ENCODE measurements at regions of chr5 and their contacts with region 1.

Region 1: GRCh38 chr5:126776497-126777256 is at the start of gene LMNB1:
- DNase-seq: peak; percentile 94
- ATAC-seq: peak; percentile 84
- H3K4me3 ChIP-seq: peak within 1 kb of the TSS; percentile 92
- H3K27ac ChIP-seq: peak within 1 kb of the TSS; percentile 87
- H3K4me1 ChIP-seq: no peaks in the 10 kb centered on the region
- H3K27me3 ChIP-seq: no peaks in the 10 kb centered on the region
- CTCF ChIP-seq: no peak
- POLR2A ChIP-seq: peak; percentile 61; the same call in 1 of the 2 replicates
- RAD21 ChIP-seq: no peak
- total RNA-seq, gene LMNB1: 53.6 and 68.6 TPM in 2 replicates

Region 2: DNA sequence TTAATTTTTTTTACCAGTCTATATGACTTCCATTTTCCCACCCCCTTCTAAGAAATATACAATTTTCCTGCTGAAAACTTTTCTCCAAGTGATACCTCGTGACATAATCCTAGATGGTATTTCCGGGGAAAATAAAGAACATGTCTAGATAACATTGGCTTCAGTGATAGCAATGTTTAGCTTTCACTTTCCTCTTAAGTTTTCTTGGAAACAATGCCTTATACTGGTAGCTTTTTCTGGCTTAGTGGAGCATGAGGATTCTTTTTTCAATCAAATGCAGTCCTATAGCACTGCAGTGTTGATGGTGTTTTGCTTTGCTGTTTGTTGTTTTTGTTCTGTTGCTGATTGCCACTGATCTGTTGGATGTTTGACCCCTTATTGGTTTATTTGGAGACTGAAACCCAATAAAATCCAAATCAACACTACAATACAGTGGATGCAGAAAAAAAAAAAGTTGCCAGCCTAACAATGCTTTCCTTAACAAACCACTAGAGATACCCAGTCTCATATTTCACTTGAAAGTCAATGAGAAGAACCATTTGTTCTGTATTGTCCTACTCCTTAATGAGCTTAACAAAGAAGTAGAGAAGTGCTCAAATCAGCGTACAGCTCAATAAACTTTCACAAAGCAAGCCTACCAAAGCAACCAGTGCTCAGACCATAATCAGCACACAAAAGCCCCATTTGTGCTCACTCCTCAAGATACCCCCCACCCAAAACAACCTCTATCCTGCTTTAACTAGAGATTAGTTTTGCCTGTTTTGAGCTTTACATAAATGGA is 427.6 kb before region 1 on chr5:
- CTCF ChIA-PET with region 1: no interaction called
- POLR2A ChIA-PET with region 1: no interaction called
- dilution Hi-C with region 1: no loop called
- in situ Hi-C with region 1: loop called (anchors 10 kb)
- intact Hi-C with region 1: no loop called
- DNase-seq: peak; percentile 54
- ATAC-seq: peak; percentile 76
- H3K4me3 ChIP-seq: no peak overlapping the region
- H3K27ac ChIP-seq: no peak overlapping the region
- H3K4me1 ChIP-seq: peaks cover 13% of the 10 kb centered on the region
- H3K27me3 ChIP-seq: no peaks in the 10 kb centered on the region
- CTCF ChIP-seq: no peak
- POLR2A ChIP-seq: no peak
- RAD21 ChIP-seq: no peak

Region 3: DNA sequence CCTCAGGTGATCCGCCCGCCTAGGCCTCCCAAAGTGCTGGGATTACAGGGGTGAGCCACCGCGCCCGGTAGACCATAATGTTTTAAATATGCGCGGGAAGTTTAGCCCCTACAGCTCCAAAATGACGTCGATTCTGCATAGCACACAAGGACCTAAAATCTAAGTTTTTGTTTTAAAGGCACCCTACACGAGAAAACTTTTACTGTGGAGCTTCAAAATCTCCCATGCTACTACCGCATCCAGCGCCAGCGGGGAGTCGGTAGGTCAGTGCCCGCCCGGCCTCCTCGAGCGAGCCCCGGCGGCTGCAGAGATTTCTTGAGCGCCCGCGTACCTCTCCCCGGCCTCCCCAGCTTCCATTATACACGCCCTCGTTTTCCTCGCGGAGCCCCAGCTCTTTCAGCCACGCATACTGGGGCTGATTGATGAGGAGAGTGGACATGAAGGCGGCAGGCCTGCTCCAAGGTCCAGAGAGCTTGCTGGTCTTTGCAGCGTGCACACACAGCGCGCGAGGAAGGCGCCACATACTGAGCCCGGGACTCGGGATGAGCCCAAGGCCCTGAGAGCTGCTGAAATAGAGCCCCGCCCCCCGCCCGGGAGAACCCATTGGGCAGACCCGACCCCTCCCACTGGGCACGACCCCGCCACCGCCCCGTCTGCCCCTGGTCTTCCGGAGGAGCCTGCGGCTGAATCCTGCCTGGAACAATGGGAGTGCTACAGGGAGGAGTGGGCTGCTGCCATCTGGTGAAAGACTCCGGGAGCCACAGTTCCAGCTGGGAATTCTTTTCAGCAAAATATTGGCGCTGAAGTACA is 181.8 kb before region 1 on chr5 and contains the start of gene ALDH7A1:
- CTCF ChIA-PET with region 1: no interaction called
- POLR2A ChIA-PET with region 1: no interaction called
- dilution Hi-C with region 1: no loop called
- in situ Hi-C with region 1: no loop called
- intact Hi-C with region 1: loop called (anchors 5 kb)
- DNase-seq: no peak
- ATAC-seq: peak; percentile 96
- H3K4me3 ChIP-seq: peak within 1 kb of the TSS; percentile 69
- H3K27ac ChIP-seq: peak within 1 kb of the TSS; percentile 70
- H3K4me1 ChIP-seq: peaks cover 4% of the 10 kb centered on the region
- H3K27me3 ChIP-seq: no peaks in the 10 kb centered on the region
- CTCF ChIP-seq: peak; percentile 56
- POLR2A ChIP-seq: peak; percentile 67
- RAD21 ChIP-seq: peak; percentile 50
- total RNA-seq, gene ALDH7A1: 40.9 and 43.9 TPM in 2 replicates

Region 4: GRCh38 chr5:126656396-126657007 is 120.2 kb before region 1 on chr5:
- CTCF ChIA-PET with region 1: interaction called, 6 read pairs
- POLR2A ChIA-PET with region 1: no interaction called
- dilution Hi-C with region 1: loop called (anchors 25 kb)
- in situ Hi-C with region 1: no loop called
- intact Hi-C with region 1: loop called (anchors 1 kb)
- DNase-seq: peak; percentile 57
- ATAC-seq: peak; percentile 44; the same call in 1 of the 2 replicates
- H3K4me3 ChIP-seq: no peak overlapping the region
- H3K27ac ChIP-seq: no peak overlapping the region
- H3K4me1 ChIP-seq: no peaks in the 10 kb centered on the region
- H3K27me3 ChIP-seq: no peaks in the 10 kb centered on the region
- CTCF ChIP-seq: peak; percentile 94
- POLR2A ChIP-seq: no peak
- RAD21 ChIP-seq: peak; percentile 84

Region 5: GRCh38 chr5:126676195-126676624 is 100.5 kb before region 1 on chr5:
- CTCF ChIA-PET with region 1: interaction called, 8 read pairs
- POLR2A ChIA-PET with region 1: no interaction called
- dilution Hi-C with region 1: loop called (anchors 25 kb)
- in situ Hi-C with region 1: loop called (anchors 10 kb)
- intact Hi-C with region 1: loop called (anchors 1 kb)
- DNase-seq: peak; percentile 60
- ATAC-seq: peak; percentile 78
- H3K4me3 ChIP-seq: no peak overlapping the region
- H3K27ac ChIP-seq: no peak overlapping the region
- H3K4me1 ChIP-seq: no peaks in the 10 kb centered on the region
- H3K27me3 ChIP-seq: no peaks in the 10 kb centered on the region; the same call in 1 of the 2 replicates
- CTCF ChIP-seq: peak; percentile 86
- POLR2A ChIP-seq: no peak
- RAD21 ChIP-seq: peak; percentile 82

Measured in IMR-90 (cell line).